ENCODE measurements at regions of chr20 and their contacts with region 1.

Region 1: GRCh38 chr20:59087829-59088433 is 45.3 kb upstream of the PRELID3B start:
- DNase-seq: peak; percentile 47
- H3K4me3 ChIP-seq: no peak overlapping the region
- H3K27ac ChIP-seq: no peak overlapping the region
- H3K4me1 ChIP-seq: peaks cover under 1% of the 10 kb centered on the region
- H3K27me3 ChIP-seq: peaks cover 7% of the 10 kb centered on the region
- CTCF ChIP-seq: peak; percentile 89 to 97

Region 2: DNA sequence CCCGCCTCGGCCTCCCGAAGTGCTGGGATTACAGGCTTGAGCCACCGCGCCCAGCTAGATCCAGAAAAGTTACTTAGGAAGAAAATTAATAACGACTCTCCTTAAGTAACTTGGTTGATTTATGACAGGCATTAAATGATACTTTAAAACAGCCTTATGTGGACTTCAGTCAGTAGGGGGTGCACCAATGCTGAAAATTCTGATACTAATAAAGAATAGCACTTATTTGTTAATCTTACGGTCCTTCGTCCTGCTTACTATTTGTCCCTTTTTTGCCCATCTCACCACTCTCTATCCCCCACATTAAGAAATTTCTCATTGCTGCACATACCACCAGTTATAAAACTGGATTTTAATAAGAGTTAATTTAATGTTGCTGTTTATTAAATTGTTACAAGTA is 32.6 kb before region 1 on chr20:
- CTCF ChIA-PET with region 1: no interaction called
- dilution Hi-C with region 1: no loop called
- in situ Hi-C with region 1: no loop called
- intact Hi-C with region 1: loop called (anchors 5 kb)
- DNase-seq: no peak
- H3K4me3 ChIP-seq: no peak overlapping the region
- H3K27ac ChIP-seq: no peak overlapping the region
- H3K4me1 ChIP-seq: no peaks in the 10 kb centered on the region
- H3K27me3 ChIP-seq: no peaks in the 10 kb centered on the region
- CTCF ChIP-seq: peak; percentile 43 to 58

Region 3: DNA sequence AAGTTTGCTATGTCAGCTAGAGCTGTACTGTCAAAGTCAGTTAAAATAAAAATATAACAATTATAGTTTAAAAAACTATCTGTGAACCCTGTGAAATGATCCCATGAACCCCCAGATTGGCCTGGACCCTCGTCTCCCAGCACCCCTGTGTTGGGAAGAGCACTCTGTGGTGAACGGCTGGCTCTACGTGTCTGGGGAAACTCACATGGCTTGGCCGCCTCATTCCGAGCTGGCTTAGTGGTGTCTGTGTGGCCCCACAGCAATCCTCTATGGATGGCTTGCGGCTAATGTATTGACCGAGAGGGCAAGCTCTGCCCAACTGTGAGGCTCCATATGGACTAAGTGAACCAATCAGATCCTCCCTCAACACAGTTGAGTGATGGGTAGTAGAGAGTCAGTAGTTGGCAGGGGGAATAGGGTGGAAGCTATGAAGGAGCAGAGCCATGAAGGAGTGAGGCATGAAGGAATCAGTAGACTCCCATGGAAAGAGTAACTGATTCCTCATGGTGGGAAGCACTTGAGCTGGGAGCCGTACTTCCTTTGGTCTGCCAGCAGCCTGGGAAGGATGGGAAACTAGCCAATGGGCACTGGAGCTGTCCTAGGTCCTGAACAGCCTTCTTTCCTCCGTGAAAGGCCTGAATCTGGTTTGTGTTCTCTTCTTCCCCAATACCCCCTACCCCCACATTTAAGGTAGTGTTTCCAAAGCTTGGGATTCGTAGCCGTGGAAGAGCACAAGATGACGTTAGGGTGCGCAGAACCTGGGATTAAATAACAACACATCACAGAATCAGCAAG is 54.1 kb after region 1 on chr20:
- CTCF ChIA-PET with region 1: no interaction called
- dilution Hi-C with region 1: no loop called
- in situ Hi-C with region 1: no loop called
- intact Hi-C with region 1: no loop called
- DNase-seq: no peak
- H3K4me3 ChIP-seq: no peak overlapping the region
- H3K27ac ChIP-seq: no peak overlapping the region
- H3K4me1 ChIP-seq: no peaks in the 10 kb centered on the region
- H3K27me3 ChIP-seq: peaks cover 2% of the 10 kb centered on the region
- CTCF ChIP-seq: no peak

Region 4: DNA sequence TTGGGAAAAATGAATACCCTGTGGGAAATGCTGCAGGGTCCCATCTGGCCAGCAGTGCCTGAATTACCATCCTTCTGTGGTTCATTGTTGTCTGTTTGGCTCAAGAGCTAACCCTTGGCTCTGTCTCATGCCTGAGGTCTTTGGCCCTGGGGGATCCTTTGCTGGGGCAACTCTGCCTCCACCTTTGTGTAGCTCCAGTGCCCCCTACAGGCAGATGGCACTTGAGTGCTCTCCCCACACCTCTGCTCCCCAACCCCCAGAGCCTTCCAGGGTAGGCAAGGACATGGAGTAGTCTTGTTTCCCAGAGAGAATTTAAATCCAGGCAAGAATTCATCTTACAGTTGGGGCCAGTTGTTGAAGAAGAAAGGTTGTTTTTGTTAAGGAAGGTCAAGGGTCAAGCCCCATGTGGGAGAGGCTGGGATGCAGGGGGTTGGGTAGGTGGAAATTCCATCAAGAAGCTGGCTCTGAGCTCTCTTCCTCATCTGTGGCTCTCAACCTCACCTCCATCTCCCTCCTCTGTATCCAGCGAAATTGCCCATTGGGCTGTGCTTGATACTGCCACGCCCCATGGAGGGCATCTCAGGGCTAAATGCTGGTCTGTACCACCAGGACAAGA is 119.9 kb after region 1 on chr20:
- CTCF ChIA-PET with region 1: no interaction called
- dilution Hi-C with region 1: no loop called
- in situ Hi-C with region 1: loop called (anchors 10 to 25 kb)
- intact Hi-C with region 1: loop called (anchors 1 kb)
- DNase-seq: peak; percentile 23
- H3K4me3 ChIP-seq: no peak overlapping the region
- H3K27ac ChIP-seq: no peak overlapping the region
- H3K4me1 ChIP-seq: no peaks in the 10 kb centered on the region
- H3K27me3 ChIP-seq: no peaks in the 10 kb centered on the region
- CTCF ChIP-seq: peak; percentile 43 to 76

Region 5: DNA sequence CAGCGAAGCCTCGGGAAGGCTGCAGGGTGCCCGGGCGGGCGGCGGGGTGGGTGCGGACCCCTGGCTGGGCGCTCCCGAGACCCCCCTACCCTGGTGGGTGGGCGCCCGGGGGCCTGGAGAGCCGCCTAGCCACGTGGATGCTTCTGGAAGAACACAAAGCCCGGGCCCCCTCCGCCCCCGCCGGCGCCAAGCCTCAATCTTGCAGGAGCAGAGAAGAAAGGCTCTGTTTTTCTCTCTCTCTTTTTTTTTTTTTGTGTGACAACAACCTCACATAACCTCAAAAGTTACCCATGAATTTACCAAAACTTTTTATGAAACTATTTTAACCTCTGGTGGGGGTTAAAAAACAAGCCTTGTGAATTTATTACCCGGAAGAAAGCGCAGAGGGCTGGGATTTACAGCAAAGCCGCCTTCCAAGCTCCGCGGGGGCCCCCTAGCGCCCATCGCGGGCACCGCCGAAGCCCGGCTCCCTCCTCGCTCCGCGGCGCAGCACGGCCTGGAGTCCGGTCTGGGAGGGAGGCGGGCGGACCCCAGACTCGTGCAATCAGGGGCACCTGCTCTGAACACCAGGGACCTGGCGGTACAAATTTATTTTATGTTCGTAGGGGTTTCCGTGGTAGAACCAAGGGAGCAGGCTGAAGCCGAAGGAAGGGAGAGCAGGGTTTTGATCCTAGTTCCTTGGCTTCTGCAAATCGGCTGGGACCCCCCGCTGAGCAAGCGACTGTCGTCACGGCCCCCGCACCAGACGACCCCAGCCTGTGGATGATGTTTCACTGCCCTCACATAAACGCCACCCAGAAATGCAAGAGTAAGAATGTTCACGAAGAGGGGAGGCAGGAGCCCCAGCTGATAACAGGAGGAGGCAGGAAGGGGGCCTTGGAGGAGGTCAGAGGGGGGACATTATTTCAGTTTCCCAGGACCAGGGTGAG is 134.6 kb after region 1 on chr20:
- CTCF ChIA-PET with region 1: no interaction called
- dilution Hi-C with region 1: no loop called
- in situ Hi-C with region 1: loop called in 1 of 2 experiments (anchors 25 kb)
- intact Hi-C with region 1: loop called (anchors 1 kb)
- DNase-seq: peak; percentile 39
- H3K4me3 ChIP-seq: peak overlapping the region; percentile 42 to 74 (median 45)
- H3K27ac ChIP-seq: no peak overlapping the region
- H3K4me1 ChIP-seq: peaks cover 6% of the 10 kb centered on the region
- H3K27me3 ChIP-seq: peaks cover 9% of the 10 kb centered on the region
- CTCF ChIP-seq: peak; percentile 72 to 92

Region 6: DNA sequence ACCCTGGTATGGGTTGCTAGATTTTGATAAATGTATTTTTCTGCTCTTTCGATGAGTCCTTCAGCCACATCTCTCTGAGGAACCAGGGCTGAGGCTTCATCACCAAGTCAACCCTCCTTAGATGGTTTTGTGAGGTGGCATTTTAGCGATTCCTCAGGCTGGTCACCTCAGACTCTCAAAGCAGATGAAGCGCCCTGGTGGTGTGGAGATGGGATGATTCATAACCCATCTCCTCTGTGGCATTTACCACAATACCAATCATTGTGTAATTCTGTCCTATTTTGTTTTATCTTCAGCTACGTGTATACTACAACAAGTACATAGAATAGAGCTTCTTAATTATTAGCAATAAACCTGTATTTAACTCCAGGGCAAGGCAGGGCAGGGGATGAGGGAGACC is 154.8 kb after region 1 on chr20:
- CTCF ChIA-PET with region 1: no interaction called
- dilution Hi-C with region 1: no loop called
- in situ Hi-C with region 1: no loop called
- intact Hi-C with region 1: no loop called
- DNase-seq: peak; percentile 31
- H3K4me3 ChIP-seq: no peak overlapping the region
- H3K27ac ChIP-seq: no peak overlapping the region
- H3K4me1 ChIP-seq: no peaks in the 10 kb centered on the region
- H3K27me3 ChIP-seq: peaks cover 8% of the 10 kb centered on the region
- CTCF ChIP-seq: no peak

Region 7: DNA sequence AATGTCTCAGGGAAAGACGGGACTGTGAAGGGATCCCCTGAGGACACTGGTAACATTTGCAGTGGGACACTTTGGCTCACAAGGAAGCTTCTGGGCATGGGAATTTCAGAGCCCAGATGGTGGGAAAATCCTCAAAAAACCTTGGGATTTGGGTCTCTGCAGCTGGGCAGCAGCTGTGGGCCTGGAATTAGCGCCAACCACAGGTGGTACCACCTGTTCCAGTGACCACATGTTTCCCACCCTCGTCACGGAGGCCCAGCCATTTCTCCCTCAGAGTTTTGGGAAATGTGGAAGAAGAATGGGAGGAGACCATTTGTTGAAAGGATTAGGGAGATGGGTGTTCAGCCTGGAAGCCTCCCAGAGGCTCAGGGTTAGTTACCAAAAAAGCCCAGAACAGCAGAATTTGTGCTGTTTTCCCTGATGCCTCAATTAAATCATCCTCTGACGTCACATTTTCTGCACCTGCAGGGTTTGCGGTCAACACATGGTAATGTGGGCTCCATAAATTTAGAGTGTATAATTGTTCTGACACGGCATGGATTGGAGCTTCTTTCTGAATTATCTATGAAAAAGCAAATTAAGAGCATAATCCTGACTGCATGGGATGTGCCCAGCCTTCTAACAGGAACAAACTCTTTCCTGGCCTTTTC is 246.8 kb after region 1 on chr20:
- CTCF ChIA-PET with region 1: no interaction called
- dilution Hi-C with region 1: no loop called
- in situ Hi-C with region 1: no loop called
- intact Hi-C with region 1: no loop called
- DNase-seq: no peak
- H3K4me3 ChIP-seq: no peak overlapping the region
- H3K27ac ChIP-seq: no peak overlapping the region
- H3K4me1 ChIP-seq: no peaks in the 10 kb centered on the region
- H3K27me3 ChIP-seq: no peaks in the 10 kb centered on the region
- CTCF ChIP-seq: no peak

Region 8: DNA sequence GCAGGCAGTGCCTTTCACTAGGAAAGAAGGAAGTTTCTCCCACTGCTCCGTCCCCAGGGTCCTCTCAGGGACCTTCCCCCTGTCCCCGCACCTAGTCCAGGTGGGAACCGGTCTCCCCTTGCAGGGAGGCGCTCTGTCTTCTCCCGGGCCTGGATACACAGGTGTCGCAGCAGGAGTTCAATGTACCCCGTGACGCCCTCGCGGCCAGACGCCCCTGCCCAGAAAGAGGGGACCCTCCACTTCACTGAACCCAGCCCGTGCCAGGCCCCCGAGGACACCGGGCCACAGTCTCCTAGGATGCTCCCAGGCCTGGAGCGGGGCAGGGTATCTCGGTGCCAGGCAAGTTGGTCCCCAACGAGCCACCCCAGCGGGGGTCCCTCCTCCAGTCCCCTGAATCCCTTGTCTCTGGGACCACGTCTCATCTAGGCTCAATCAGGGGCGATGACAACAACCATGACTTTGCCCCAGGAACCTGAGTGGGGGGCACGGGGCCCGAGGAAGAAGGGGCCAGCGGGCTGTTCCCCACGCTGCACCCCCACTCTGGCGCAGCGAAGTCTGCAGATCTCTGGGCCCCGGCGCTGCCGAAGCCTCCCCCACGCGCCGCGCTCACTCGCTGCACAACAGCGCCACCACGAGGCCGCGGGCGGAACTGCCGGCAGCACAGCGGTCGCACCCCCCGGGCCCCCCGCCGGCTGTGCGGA is 315.5 kb after region 1 on chr20:
- CTCF ChIA-PET with region 1: no interaction called
- dilution Hi-C with region 1: no loop called
- in situ Hi-C with region 1: no loop called
- intact Hi-C with region 1: loop called (anchors 2 kb)
- DNase-seq: no peak
- H3K4me3 ChIP-seq: no peak overlapping the region
- H3K27ac ChIP-seq: no peak overlapping the region
- H3K4me1 ChIP-seq: peaks cover 6% of the 10 kb centered on the region
- H3K27me3 ChIP-seq: peaks cover 2% of the 10 kb centered on the region
- CTCF ChIP-seq: peak; percentile 80 to 88

Region 9: GRCh38 chr20:59455402-59456341 is 367.7 kb after region 1 on chr20:
- CTCF ChIA-PET with region 1: interaction called, 12 read pairs
- dilution Hi-C with region 1: no loop called
- in situ Hi-C with region 1: no loop called
- intact Hi-C with region 1: loop called (anchors 1 kb)
- DNase-seq: peak; percentile 5
- H3K4me3 ChIP-seq: no peak overlapping the region
- H3K27ac ChIP-seq: no peak overlapping the region
- H3K4me1 ChIP-seq: no peaks in the 10 kb centered on the region
- H3K27me3 ChIP-seq: no peaks in the 10 kb centered on the region
- CTCF ChIP-seq: peak; percentile 48 to 63

Region 10: GRCh38 chr20:59495894-59496510 is 408.1 kb after region 1 on chr20:
- CTCF ChIA-PET with region 1: no interaction called
- dilution Hi-C with region 1: no loop called
- in situ Hi-C with region 1: no loop called
- intact Hi-C with region 1: loop called (anchors 5 kb)
- DNase-seq: peak; percentile 32
- H3K4me3 ChIP-seq: no peak overlapping the region
- H3K27ac ChIP-seq: no peak overlapping the region
- H3K4me1 ChIP-seq: no peaks in the 10 kb centered on the region
- H3K27me3 ChIP-seq: no peaks in the 10 kb centered on the region
- CTCF ChIP-seq: peak; percentile 83 to 90